ENCODE measurements at regions of chr11 and their contacts with region 1.

Region 1: DNA sequence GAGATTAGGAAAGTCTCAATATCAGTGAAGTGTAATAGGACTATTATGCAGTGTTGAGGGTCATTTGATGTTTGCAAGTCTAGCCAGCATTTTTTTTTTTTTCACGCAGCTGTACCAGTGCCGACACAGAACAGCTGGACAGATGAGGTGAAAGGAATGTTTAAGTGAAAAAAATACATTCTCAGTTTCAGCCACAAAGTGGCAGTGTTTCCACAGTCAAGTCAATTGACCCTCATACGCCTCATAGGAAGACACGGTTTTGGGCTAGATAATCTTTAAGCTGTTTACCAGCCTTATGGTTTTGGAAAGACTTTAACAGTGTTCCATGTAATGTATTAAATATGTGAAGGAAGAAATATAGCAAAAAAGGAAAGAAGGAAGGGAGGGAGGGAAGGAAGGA is 349.9 kb upstream of the ANO3 start:
- DNase-seq: no peak
- H3K4me3 ChIP-seq: no peak overlapping the region
- H3K27ac ChIP-seq: no peak overlapping the region
- H3K27me3 ChIP-seq: peaks cover 0 to 2% (median 0%) of the 10 kb centered on the region in 45 donors
- CTCF ChIP-seq: peak in 55 of 56 donors; percentile 40 to 84 (median 64)

Region 2: DNA sequence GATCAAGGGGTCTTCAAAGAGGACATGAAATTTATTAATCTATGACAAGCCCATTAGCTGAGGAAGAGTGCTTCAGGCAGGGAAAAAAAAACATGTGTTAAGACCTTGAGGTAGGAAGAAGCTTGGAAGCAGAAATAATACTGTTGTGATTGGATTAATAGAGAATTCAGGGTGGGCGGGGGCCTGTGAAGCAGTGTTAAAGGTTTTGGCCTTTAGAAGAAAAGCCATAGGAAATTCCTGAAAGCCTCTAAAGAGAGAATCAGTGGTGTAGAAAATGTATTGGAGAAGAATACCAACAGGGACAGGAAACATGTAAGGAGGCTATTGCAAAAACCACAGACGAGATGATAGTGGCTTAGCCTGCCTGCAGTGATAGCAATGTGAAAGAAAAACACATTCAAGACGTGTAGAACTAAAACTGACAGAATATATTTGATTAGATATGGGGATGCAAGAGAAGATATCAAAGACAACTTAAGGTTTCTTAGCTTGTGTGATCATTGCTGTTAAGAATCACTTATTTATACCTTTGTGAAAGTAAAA is 54.5 kb before region 1 on chr11:
- intact Hi-C with region 1: no loop called
- DNase-seq: no peak
- H3K4me3 ChIP-seq: no peak overlapping the region
- H3K27ac ChIP-seq: no peak overlapping the region
- H3K27me3 ChIP-seq: peaks cover 0 to 6% (median 0%) of the 10 kb centered on the region in 45 donors
- CTCF ChIP-seq: no peak

Region 3: DNA sequence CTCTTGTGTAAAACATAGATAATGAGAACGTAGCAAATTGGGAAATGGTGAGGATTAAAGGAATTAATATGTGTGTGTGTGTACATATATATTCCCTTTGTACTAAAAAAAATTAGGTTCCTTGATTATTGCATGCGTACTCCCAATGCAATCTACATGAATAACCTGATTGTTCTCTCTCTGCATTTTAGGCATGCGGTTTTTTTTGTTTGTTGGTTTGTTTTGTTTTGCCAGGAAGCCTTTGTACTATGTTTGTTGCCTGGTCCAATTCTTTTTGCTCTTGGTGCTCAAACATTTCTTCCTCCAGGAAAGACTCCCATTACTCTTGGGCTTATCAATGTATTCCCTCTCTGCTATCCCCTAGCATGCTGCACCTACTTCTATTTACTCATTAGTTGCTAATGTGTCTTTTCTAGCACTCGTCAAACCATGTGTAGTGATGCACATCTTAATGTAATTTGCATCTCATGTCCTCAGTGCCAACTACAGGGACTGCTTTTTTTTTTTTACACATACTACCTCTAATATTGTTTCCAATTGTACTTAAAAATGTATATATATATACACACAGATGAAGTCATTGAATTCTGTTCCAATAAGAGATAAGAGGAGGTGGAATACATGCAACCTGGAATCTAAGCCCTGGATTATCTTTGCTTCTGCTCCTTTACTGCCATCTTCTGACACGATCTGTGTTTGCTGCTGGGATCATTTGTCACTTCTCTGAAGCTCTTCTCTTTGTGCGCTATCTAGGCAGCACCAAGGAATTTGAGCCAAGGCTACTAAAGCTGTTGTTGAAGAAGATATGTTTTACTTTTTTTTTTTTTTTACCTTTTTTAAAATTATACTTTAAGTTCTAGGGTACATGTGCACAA is 152.7 kb after region 1 on chr11:
- intact Hi-C with region 1: loop called (anchors 2 to 10 kb)
- DNase-seq: no peak
- H3K4me3 ChIP-seq: no peak overlapping the region
- H3K27ac ChIP-seq: no peak overlapping the region
- H3K27me3 ChIP-seq: peaks cover 0 to 10% (median 0%) of the 10 kb centered on the region in 45 donors
- CTCF ChIP-seq: peak in 55 of 56 donors; percentile 17 to 68 (median 43)

Region 4: DNA sequence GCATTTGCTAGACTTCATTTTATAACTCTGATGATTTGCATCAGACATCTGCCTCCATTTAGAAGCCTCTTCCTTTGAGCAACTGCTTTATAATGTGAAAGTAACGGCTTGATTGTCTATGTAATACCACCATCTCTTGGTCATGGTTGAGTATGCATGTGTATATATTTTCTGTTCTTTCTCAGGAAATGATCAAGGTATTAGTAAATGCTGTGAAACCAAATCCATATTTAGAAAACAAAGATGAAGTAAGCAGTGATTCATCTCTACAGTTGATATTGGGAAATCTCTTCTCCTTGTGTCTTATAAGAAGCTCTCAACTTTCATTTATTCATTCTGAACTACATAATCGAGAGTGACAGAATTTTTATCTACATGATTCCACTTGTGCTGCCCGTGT is 245.3 kb after region 1 on chr11:
- intact Hi-C with region 1: loop called in 1 of 2 experiments (anchors 5 kb)
- DNase-seq: no peak
- H3K4me3 ChIP-seq: no peak overlapping the region
- H3K27ac ChIP-seq: no peak overlapping the region
- H3K27me3 ChIP-seq: no peaks in the 10 kb centered on the region
- CTCF ChIP-seq: peak in 53 of 56 donors; percentile 21 to 74 (median 53)

Region 5: DNA sequence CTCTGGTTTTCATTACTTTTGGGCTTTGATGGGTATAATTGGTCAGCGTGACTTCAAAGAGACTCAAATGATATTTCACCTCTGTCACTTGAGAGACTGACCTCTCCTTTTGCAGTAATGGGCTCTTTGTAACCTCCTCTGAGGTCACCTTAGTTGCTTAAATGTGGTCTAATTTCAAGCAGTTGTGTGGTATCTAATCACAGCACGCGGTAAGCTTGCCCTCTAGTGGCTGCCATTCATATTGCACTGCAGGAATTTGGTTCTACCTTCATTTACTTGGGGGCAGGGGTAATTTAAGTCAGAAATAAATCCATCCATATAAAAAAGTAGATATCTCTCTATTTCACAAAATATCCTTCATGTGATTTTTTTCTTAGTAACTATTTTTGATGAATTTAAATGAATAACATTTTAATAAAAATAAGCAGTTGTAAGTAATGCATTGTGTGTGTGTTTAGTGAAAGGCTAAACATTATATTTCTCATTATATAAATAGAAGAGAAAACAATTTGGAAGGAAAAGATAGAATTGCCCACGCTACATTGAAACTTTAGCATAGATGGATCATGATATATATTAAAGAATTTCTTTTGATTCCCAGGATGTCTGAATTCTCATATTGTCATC is 294.9 kb after region 1 on chr11:
- intact Hi-C with region 1: loop called in 1 of 2 experiments (anchors 5 kb)
- DNase-seq: peak in 7 of 10 donors; percentile 34 to 73 (median 53)
- H3K4me3 ChIP-seq: no peak overlapping the region
- H3K27ac ChIP-seq: no peak overlapping the region
- H3K27me3 ChIP-seq: peaks cover 0 to 10% (median 0%) of the 10 kb centered on the region in 45 donors
- CTCF ChIP-seq: peak; percentile 67 to 96 (median 89)